PC-3 (cell line): ENCODE measurements at regions of chr7 and their contacts with region 1.

Region 1: DNA sequence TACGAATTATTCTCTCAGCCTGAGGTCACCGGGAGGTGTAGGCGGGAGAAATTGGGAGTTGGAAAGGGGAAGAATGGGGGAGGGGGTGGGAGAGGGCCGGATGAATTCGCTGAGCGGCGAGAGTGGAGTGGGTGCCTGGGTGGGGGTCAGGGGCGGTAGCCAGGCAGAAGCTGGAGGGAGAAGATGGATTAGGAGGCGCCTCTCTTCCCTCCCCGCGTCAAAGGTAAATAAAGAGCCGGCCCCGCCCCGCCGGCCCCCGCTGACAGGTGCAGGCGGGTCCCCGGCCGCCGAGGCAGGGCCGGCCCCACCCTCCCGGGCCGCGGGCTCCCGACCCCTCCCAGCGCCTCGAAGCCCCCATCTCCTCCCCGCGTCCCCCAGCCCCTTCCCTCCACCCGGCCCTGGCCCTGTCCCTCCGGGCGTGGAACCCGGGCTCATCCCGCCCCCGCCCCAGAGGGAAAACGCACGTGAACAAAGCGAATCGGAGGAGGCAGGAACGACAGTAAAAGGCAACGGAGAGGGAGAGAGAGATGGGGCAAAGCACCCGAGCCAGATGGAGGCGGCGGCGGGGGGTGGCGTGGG is 872 bp downstream of the FAM131B start:
- DNase-seq: no peak
- ATAC-seq: peak; percentile 50
- H3K4me3 ChIP-seq: peak overlapping the region; percentile 82
- H3K27ac ChIP-seq: no peak overlapping the region
- H3K4me1 ChIP-seq: no peaks in the 10 kb centered on the region; the same call in 1 of the 2 replicates
- H3K27me3 ChIP-seq: peaks cover 9% of the 10 kb centered on the region
- CTCF ChIP-seq: no peak

Region 2: GRCh38 chr7:143085109-143085508 is 276.5 kb before region 1 on chr7:
- CTCF ChIA-PET with region 1: no interaction called
- POLR2A ChIA-PET with region 1: no interaction called
- intact Hi-C with region 1: no loop called
- DNase-seq: no peak
- ATAC-seq: no peak
- H3K4me3 ChIP-seq: no peak overlapping the region
- H3K27ac ChIP-seq: no peak overlapping the region
- H3K4me1 ChIP-seq: no peaks in the 10 kb centered on the region
- H3K27me3 ChIP-seq: peaks cover 30% of the 10 kb centered on the region; the same call in 1 of the 2 replicates
- CTCF ChIP-seq: no peak

Region 3: DNA sequence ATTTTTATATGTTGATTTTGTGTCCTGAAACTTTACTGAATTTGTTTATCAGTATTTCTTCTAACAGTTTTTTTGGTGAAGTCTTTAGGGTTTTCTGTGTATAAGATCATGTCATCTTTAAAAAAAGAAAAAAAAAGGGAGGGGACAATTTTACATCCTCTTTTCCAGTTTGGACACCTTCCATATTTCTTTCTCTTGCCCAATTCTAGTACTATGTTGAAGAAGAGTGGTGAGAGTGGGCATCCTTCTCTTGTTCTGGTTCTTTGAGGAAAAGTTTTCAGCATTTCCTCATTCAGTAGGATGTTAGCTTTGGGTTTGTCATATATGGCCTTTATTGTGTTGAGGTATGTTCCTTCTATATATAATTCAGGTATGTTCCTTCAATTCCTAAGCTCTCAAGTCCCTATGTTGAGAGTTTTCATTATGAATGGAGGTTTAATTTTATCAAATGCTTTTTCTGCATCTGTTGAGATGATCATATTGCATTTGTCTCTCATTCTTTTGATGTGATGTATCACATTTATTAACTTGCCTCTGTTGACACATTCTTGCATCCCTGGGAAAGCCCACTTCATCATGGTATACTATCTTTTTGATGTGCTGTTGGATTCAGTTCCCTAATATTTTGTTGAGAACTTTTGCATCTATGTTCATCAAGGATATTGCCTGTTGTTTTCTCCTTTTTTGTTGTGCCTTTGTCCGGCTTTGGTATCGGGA is 127.7 kb before region 1 on chr7:
- CTCF ChIA-PET with region 1: no interaction called
- POLR2A ChIA-PET with region 1: no interaction called
- intact Hi-C with region 1: no loop called
- DNase-seq: no peak
- ATAC-seq: no peak
- H3K4me3 ChIP-seq: no peak overlapping the region
- H3K27ac ChIP-seq: no peak overlapping the region
- H3K4me1 ChIP-seq: peaks cover 4% of the 10 kb centered on the region; the same call in 1 of the 2 replicates
- H3K27me3 ChIP-seq: no peaks in the 10 kb centered on the region
- CTCF ChIP-seq: no peak

Region 4: GRCh38 chr7:143337216-143337615 is 24.4 kb before region 1 on chr7:
- CTCF ChIA-PET with region 1: no interaction called
- POLR2A ChIA-PET with region 1: interaction called, 6 read pairs
- intact Hi-C with region 1: loop called (anchors 1 kb)
- DNase-seq: no peak
- ATAC-seq: peak; percentile 76
- H3K4me3 ChIP-seq: no peak overlapping the region; the same call in 1 of the 2 replicates
- H3K27ac ChIP-seq: peak overlapping the region; percentile 41
- H3K4me1 ChIP-seq: peaks cover 41% of the 10 kb centered on the region
- H3K27me3 ChIP-seq: no peaks in the 10 kb centered on the region
- CTCF ChIP-seq: no peak

Region 5: DNA sequence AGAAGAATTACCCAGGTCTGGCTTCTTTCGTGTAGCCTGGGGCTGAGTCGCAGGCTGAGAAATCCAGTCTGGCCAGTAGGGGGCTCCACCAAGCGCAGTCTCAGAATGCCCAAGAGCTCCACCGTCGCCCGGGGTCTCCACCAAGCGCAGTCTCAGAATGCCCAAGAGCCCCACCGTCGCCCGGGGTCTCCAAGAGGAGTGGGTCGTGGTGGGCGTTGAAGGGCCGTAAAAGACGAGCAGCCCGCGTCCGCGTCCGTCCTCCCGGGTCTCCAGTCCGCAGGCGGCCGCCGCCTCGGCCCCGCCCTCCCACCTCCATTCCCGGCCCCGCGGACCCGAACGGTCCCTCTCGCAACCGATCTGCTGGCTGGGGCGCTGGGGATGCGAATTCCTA is 18.6 kb after region 1 on chr7:
- CTCF ChIA-PET with region 1: no interaction called
- POLR2A ChIA-PET with region 1: no interaction called
- intact Hi-C with region 1: no loop called
- DNase-seq: peak; percentile 79
- ATAC-seq: peak; percentile 34
- H3K4me3 ChIP-seq: peak overlapping the region; percentile 96
- H3K27ac ChIP-seq: peak overlapping the region; percentile 95
- H3K4me1 ChIP-seq: peaks cover 55% of the 10 kb centered on the region
- H3K27me3 ChIP-seq: no peaks in the 10 kb centered on the region
- CTCF ChIP-seq: peak; percentile 87

Region 6: DNA sequence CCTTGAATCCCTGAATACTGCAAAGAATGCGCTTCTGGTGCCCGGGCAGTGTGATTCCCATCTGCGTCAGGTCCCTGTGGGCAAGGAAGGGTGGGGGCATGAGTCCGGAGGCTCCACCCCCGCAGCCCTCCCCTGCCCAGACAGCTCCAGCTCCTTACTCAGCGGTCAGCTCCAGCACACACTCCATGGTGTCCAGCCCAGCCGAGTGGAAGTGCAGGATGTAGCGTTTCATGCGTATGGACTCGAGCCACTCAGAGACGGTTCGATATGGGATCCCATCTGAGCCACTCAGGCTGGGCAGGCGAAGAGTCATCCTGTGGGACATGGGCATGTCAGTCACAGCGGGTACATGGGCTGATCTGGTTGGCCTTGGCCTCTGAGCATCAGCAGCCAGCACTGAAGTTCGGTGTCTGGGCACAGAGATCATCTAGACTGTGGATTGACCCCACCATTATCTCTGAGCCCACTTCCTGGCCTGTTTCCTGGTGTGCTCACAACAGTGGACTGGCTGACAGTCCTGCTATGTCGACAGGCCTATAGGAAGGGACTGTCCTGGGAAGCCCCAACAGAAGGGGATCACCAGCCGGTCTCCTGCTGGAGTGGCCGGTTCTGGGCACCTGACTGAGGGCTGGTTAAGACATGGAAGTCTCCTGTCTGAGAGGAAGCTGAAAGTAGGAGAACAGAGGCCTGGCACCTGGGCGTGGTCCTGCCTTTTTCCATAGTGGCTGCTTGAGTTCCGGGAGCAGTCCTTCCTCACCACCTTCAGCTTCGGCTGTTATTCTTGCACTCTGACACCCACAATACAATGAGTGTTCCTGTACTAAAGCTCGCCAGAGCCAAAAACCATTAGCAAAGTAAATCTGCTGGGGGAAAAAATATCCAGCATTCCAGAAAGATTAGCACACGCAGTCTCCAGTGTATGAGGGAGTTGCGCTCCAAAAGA is 30.1 kb after region 1 on chr7:
- CTCF ChIA-PET with region 1: no interaction called
- POLR2A ChIA-PET with region 1: no interaction called
- intact Hi-C with region 1: no loop called
- DNase-seq: no peak
- ATAC-seq: peak; percentile 2
- H3K4me3 ChIP-seq: no peak overlapping the region
- H3K27ac ChIP-seq: no peak overlapping the region
- H3K4me1 ChIP-seq: no peaks in the 10 kb centered on the region
- H3K27me3 ChIP-seq: no peaks in the 10 kb centered on the region
- CTCF ChIP-seq: no peak